ENCODE measurements at regions of chr17 and their contacts with region 1.

Region 1: GRCh38 chr17:50570528-50570927 is 10.0 kb downstream of the CACNA1G start:
- DNase-seq: no peak
- ATAC-seq: no peak
- H3K4me3 ChIP-seq: no peak overlapping the region
- H3K27ac ChIP-seq: no peak overlapping the region
- H3K4me1 ChIP-seq: no peaks in the 10 kb centered on the region
- CTCF ChIP-seq: no peak
- EP300 ChIP-seq: no peak
- POLR2A ChIP-seq: no peak
- RAD21 ChIP-seq: no peak

Region 2: GRCh38 chr17:50583641-50584040 is 13.1 kb after region 1 on chr17:
- CTCF ChIA-PET with region 1: interaction called, 14 read pairs
- POLR2A ChIA-PET with region 1: no interaction called
- DNase-seq: no peak
- ATAC-seq: peak in 1 of 2 experiments; percentile 34; a peak in 3 of 6 replicates
- H3K4me3 ChIP-seq: no peak overlapping the region
- H3K27ac ChIP-seq: no peak overlapping the region
- H3K4me1 ChIP-seq: no peaks in the 10 kb centered on the region
- CTCF ChIP-seq: no peak
- EP300 ChIP-seq: no peak
- POLR2A ChIP-seq: no peak
- RAD21 ChIP-seq: no peak

Region 3: DNA sequence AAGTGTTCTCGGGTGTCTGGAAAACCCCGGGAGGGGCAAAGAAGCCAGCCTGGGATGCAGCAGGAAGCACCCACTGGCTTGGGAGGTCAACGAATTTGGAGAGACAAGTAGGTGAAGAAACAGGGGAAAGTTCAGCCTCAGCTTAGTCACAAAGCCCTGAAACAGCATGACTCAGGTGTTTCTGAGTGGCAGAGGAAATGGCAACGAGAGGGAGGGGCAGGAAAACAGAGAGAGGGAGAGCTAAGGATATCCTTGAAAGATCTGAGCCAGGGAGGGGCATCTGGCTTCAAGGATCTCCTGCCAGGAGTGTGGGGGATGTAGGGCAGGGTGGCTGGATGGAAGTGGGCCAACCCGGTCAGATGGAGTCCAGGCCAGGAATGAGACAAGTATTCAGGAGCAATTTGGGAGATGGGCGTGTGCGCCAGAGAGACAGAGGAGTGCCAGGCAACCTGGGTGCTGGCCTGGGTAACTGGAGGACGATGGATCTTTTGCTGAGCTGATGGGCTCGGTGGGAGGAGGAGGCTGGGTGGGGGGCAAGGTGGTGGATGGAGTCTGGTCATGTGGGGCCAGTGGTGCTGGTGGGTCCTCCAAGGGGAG is 91.4 kb after region 1 on chr17:
- CTCF ChIA-PET with region 1: no interaction called
- POLR2A ChIA-PET with region 1: no interaction called
- DNase-seq: peak; percentile 100
- ATAC-seq: peak; percentile 61 to 75
- H3K4me3 ChIP-seq: 0 out of 3 replicates have a peak overlapping the region, but pooled peaks have one; percentile 8
- H3K27ac ChIP-seq: peak overlapping the region; percentile 98
- H3K4me1 ChIP-seq: peaks cover 97% of the 10 kb centered on the region
- CTCF ChIP-seq: no peak
- EP300 ChIP-seq: peak; percentile 96 to 98
- POLR2A ChIP-seq: no peak
- RAD21 ChIP-seq: peak; percentile 21 to 65; a peak in 4 of 5 replicates